ENCODE measurements at regions of chr1 and their contacts with region 1.

Region 1: GRCh38 chr1:29181413-29182225 is at the start of gene SRSF4:
- DNase-seq: peak; percentile 97 to 99 (median 99)
- ATAC-seq: peak; percentile 89
- H3K4me3 ChIP-seq: peak within 1 kb of the TSS; percentile 79
- H3K4me3 Mint-ChIP-seq: peak within 1 kb of the TSS; percentile 97
- H3K27ac ChIP-seq: peak within 1 kb of the TSS; percentile 97 to 99
- H3K27ac Mint-ChIP-seq: peak within 1 kb of the TSS; percentile 93
- H3K4me1 ChIP-seq: peaks cover 39% of the 10 kb centered on the region
- H3K4me1 Mint-ChIP-seq: peaks cover 50% of the 10 kb centered on the region
- H3K27me3 ChIP-seq: no peaks in the 10 kb centered on the region
- H3K27me3 Mint-ChIP-seq: no peaks in the 10 kb centered on the region
- CTCF ChIP-seq: peak; percentile 72
- total RNA-seq, gene SRSF4: 89.2 to 93.4 TPM

Region 2: DNA sequence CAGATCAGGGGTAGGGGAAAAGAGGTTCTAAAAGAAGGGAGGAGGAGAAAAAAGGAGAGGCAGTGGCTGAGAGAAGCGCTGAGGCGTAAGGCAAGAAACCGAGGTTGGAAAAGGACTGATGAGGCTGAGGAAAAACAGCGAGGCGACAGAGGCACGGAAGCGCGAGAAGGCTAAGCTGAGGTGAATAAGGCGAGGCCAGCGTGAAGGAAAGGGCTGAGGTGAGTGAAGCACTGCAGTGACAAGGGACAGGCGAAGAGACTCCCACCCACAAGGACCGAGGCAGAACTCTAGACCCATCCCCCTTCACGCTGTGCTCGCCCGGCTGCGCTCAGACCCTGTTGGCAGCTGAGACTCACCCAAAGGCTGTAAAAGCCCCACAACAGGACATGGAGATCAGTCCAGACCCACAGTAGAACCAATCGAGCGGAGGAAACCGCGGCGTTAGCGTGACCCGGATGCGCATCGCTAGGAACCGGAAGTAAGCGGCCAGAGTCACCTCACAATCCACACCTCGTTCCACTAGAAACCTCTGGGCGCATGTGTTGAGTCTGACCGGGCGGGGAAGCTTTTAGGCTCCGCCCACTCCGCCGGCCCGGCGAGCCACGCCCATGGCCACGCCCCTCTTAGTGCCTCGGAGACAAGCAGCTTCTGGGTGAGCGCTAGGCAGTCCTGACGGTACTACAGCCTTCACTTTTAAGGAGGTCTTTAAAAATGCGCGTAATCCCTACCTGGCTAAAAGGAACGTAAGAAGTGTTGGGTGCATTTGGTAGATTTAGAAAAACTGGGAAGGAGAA is 1093.3 kb before region 1 on chr1 and contains the start of gene EYA3:
- CTCF ChIA-PET with region 1: no interaction called
- POLR2A ChIA-PET with region 1: no interaction called
- intact Hi-C with region 1: loop called in 1 of 2 experiments (anchors 10 kb)
- DNase-seq: peak; percentile 97 to 100 (median 99)
- ATAC-seq: peak; percentile 92
- H3K4me3 ChIP-seq: peak within 1 kb of the TSS; percentile 81
- H3K4me3 Mint-ChIP-seq: peak within 1 kb of the TSS; percentile 97
- H3K27ac ChIP-seq: peak within 1 kb of the TSS; percentile 69 to 86
- H3K27ac Mint-ChIP-seq: peak within 1 kb of the TSS; percentile 79
- H3K4me1 ChIP-seq: peaks cover 22% of the 10 kb centered on the region
- H3K4me1 Mint-ChIP-seq: peaks cover 42% of the 10 kb centered on the region
- H3K27me3 ChIP-seq: no peaks in the 10 kb centered on the region
- H3K27me3 Mint-ChIP-seq: no peaks in the 10 kb centered on the region
- CTCF ChIP-seq: no peak
- total RNA-seq, gene EYA3: 5.7 to 6.4 TPM

Region 3: GRCh38 chr1:28581536-28582247 is 599.9 kb before region 1 on chr1:
- CTCF ChIA-PET with region 1: interaction called, 5 read pairs
- POLR2A ChIA-PET with region 1: interaction called, 24 read pairs
- intact Hi-C with region 1: no loop called
- DNase-seq: peak; percentile 85 to 97 (median 92)
- ATAC-seq: peak; percentile 83
- H3K4me3 ChIP-seq: peak overlapping the region; percentile 93
- H3K4me3 Mint-ChIP-seq: peak overlapping the region; percentile 94
- H3K27ac ChIP-seq: peak overlapping the region; percentile 70 to 83
- H3K27ac Mint-ChIP-seq: peak overlapping the region; percentile 81
- H3K4me1 ChIP-seq: peaks cover 39% of the 10 kb centered on the region
- H3K4me1 Mint-ChIP-seq: peaks cover 48% of the 10 kb centered on the region
- H3K27me3 ChIP-seq: no peaks in the 10 kb centered on the region
- H3K27me3 Mint-ChIP-seq: no peaks in the 10 kb centered on the region
- CTCF ChIP-seq: no peak

Region 4: DNA sequence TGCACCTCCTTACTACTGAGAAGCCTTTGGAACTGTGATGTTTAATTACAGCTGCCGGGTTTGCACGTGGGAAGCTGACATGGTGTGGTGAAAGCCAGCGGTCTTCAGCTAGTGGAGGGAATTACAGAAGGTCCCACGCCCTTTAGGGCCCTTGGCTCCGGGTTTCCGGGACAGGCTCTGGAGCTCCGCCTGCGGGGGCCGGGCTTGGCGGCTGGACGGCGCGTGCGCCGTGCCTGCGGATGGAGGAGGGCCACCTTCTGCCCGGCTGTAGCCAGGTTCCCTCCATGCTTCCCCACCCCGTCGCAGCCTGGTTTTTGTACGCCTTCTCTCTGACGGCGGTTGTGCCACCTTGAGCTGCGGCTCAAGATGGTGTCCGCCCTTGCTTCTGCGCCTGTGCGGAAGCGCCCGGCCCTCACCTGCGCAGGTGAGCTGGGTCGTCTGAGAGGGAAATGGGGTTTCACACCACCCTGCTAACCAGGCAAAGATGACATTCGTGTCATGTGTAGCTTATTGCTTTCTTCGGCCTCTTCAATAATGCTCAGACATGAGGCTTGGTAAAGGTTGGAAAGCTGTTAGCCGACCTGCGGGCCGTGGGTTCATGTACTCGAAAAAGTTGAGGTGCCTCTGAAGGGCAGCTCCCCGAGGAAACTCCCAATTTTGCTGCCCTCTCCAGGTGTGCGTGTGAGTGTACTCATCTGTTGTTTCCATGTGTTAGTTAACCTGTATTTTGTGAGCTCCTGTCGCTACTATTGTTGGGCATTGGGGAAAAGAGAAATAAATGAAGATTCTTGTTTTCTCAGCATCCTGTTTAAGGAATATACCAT is 406.3 kb before region 1 on chr1:
- CTCF ChIA-PET with region 1: no interaction called
- POLR2A ChIA-PET with region 1: interaction called, 18 read pairs
- intact Hi-C with region 1: no loop called
- DNase-seq: peak; percentile 39 to 89 (median 66)
- ATAC-seq: peak; percentile 93
- H3K4me3 ChIP-seq: peak overlapping the region; percentile 54
- H3K4me3 Mint-ChIP-seq: peak overlapping the region; percentile 88
- H3K27ac ChIP-seq: peak overlapping the region; percentile 26 to 38
- H3K27ac Mint-ChIP-seq: peak overlapping the region; percentile 90
- H3K4me1 ChIP-seq: peaks cover 14% of the 10 kb centered on the region
- H3K4me1 Mint-ChIP-seq: peaks cover 13% of the 10 kb centered on the region
- H3K27me3 ChIP-seq: no peaks in the 10 kb centered on the region
- H3K27me3 Mint-ChIP-seq: no peaks in the 10 kb centered on the region
- CTCF ChIP-seq: no peak

Region 5: DNA sequence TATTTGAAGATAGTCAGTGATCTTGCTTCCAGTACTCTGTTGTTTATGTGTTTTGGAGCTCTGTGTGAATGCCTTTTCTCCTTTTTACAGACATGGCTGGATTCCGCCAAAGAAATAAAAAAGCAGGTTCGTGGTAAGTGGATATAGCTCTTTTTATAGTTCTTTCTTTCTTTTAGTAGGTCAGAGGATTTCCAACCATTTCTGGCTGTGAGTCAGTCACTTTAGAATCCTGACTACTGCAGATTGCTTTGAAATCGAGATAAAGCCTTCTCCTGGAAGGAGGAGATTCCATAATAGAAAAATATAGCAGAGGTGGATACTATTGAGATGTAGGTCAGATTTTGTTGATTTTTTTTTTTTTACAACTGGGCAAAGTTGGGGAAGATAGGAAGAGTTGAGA is 169.8 kb before region 1 on chr1:
- CTCF ChIA-PET with region 1: no interaction called
- POLR2A ChIA-PET with region 1: no interaction called
- intact Hi-C with region 1: no loop called
- DNase-seq: no peak
- ATAC-seq: no peak
- H3K4me3 ChIP-seq: no peak overlapping the region
- H3K4me3 Mint-ChIP-seq: no peak overlapping the region
- H3K27ac ChIP-seq: no peak overlapping the region
- H3K27ac Mint-ChIP-seq: peak overlapping the region; percentile 52
- H3K4me1 ChIP-seq: no peaks in the 10 kb centered on the region
- H3K4me1 Mint-ChIP-seq: peaks cover 26% of the 10 kb centered on the region
- H3K27me3 ChIP-seq: no peaks in the 10 kb centered on the region
- H3K27me3 Mint-ChIP-seq: no peaks in the 10 kb centered on the region
- CTCF ChIP-seq: no peak

Region 6: DNA sequence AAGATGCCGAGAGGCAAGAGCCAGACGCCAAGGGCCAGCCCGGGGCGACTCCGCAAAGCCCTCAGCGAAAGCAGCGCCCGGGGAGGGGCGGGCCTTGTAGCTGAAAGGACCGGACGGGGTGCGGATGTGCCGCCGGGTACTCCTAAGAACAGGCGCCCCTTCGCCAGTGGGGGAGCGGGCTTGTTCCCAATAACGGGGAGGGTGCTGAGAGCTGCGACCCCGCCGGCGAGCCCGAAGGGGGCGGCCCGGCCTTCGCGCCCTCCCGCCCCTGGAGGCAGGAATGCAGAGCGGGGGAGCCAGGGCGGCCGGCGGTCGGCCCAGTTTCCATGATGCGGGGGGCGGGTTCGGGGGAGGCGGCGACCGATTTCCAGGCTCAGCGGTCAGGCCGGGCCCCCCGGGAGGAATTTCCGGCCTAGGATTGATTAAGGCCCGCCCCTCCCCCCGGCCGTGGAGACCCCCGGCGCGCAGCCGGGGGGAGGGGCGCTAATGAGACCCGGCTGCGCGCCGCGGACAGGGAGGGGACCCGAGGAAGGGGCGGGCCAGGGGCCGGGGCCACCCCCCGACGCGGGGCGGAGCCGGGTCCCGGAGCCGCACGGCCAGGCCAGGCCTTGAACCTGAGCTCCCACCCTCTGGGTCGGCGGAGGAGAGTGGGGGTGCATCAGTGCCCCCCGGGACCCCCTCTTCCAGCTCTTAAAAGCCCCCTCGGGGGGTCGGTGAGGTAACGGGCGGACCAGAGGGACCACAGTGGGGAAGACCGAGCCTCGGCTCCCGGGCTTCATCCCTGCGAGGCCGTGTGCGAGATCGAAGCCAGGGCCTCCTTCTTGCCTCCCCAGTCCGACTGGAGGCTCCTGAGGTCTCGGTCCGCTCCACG is 57.0 kb before region 1 on chr1:
- CTCF ChIA-PET with region 1: no interaction called
- POLR2A ChIA-PET with region 1: interaction called, 16 read pairs
- intact Hi-C with region 1: loop called in 1 of 2 experiments (anchors 10 kb)
- DNase-seq: peak; percentile 20 to 69 (median 42)
- ATAC-seq: peak; percentile 55
- H3K4me3 ChIP-seq: peak overlapping the region; percentile 61
- H3K4me3 Mint-ChIP-seq: peak overlapping the region; percentile 48
- H3K27ac ChIP-seq: no peak overlapping the region
- H3K27ac Mint-ChIP-seq: no peak overlapping the region
- H3K4me1 ChIP-seq: peaks cover 41% of the 10 kb centered on the region
- H3K4me1 Mint-ChIP-seq: peaks cover 8% of the 10 kb centered on the region
- H3K27me3 ChIP-seq: peaks cover 25 to 44% of the 10 kb centered on the region in 2 experiments
- H3K27me3 Mint-ChIP-seq: peaks cover 26% of the 10 kb centered on the region
- CTCF ChIP-seq: no peak

Region 7: GRCh38 chr1:29202584-29203340 is 21.1 kb after region 1 on chr1:
- CTCF ChIA-PET with region 1: interaction called, 26 read pairs
- POLR2A ChIA-PET with region 1: interaction called, 23 read pairs
- intact Hi-C with region 1: no loop called
- DNase-seq: peak; percentile 79 to 94 (median 88)
- ATAC-seq: peak; percentile 93
- H3K4me3 ChIP-seq: no peak overlapping the region
- H3K4me3 Mint-ChIP-seq: no peak overlapping the region
- H3K27ac ChIP-seq: no peak overlapping the region
- H3K27ac Mint-ChIP-seq: no peak overlapping the region
- H3K4me1 ChIP-seq: peaks cover 3% of the 10 kb centered on the region
- H3K4me1 Mint-ChIP-seq: no peaks in the 10 kb centered on the region
- H3K27me3 ChIP-seq: no peaks in the 10 kb centered on the region
- H3K27me3 Mint-ChIP-seq: no peaks in the 10 kb centered on the region
- CTCF ChIP-seq: peak; percentile 88

Measured in CD4-positive, alpha-beta T cell (primary cell).